Psoas muscle (tissue), 8 donors: ENCODE measurements at regions of chr1 and their contacts with region 1.

Region 1: DNA sequence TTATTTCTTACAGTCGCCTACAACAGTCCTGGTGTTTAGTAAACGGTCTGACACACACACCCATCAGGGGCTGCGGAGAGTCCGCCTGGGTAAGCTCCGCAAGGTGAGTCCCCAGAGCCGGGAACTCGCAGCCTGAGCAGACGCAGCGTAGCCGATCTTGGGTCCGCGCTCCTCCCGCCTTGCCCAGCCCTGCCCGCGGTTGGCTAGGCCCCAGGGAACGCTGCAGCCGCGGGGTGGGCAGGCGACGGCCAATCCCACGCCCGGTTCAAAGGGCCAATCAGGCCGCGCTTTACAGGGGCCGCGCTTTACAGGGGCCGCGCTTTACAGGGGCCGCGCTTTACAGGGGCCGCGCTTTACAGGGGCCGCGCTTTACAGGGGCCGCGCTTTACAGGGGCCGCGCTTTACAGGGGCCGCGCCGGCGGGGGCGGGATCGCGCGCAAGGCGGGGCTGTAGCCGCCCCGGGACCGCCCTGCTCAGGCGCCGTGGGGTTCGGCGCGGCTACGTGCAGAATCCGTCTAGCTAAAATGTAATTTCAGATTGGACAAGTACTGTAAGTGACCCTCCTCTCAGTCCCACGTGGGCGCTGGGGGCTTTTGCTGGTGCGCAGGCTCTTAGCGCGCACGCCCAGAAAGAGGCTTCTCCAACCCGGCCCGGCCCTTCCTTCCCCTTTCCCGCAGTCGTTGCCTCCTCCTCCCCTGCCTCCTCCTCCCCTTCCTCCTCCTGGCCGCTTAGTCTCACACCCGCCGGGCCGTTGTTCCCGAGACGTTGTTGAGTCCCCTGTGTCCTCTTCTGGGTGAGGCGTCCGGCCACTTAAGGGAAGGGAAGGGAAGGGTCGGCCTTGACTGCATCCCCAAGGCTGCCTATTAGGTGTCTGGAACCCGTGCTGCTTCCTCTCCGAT is at the start of gene FGGY:
- DNase-seq: peak; percentile 97 to 99
- ATAC-seq: peak; percentile 82 to 88 (median 86)
- H3K4me3 ChIP-seq: peak within 1 kb of the TSS; percentile 71
- H3K27ac ChIP-seq: peak within 1 kb of the TSS; percentile 95
- H3K4me1 ChIP-seq: peaks cover 48% of the 10 kb centered on the region
- H3K27me3 ChIP-seq: no peaks in the 10 kb centered on the region
- CTCF ChIP-seq: no peak
- total RNA-seq, gene FGGY: 46.5 to 72.2 (median 55.8) TPM

Region 2: GRCh38 chr1:58783993-58784757 is 512.4 kb before region 1 on chr1 and contains the start of gene JUN:
- intact Hi-C with region 1: loop called (anchors 2 to 5 kb)
- DNase-seq: peak; percentile 100
- ATAC-seq: peak; percentile 76 to 89 (median 80)
- H3K4me3 ChIP-seq: peak within 1 kb of the TSS; percentile 99
- H3K27ac ChIP-seq: peak within 1 kb of the TSS; percentile 100
- H3K4me1 ChIP-seq: peaks cover 19% of the 10 kb centered on the region
- H3K27me3 ChIP-seq: no peaks in the 10 kb centered on the region
- CTCF ChIP-seq: no peak
- total RNA-seq, gene JUN: 93.8 to 213 (median 164) TPM

Region 3: GRCh38 chr1:58903514-58904298 is 392.9 kb before region 1 on chr1:
- intact Hi-C with region 1: loop called (anchors 5 to 10 kb)
- DNase-seq: peak; percentile 95 to 97
- ATAC-seq: peak; percentile 90 to 94 (median 92)
- H3K4me3 ChIP-seq: peak overlapping the region; percentile 72
- H3K27ac ChIP-seq: peak overlapping the region; percentile 95
- H3K4me1 ChIP-seq: peaks cover 59% of the 10 kb centered on the region
- H3K27me3 ChIP-seq: no peaks in the 10 kb centered on the region
- CTCF ChIP-seq: no peak

Region 4: GRCh38 chr1:58982259-58982998 is 314.2 kb before region 1 on chr1:
- intact Hi-C with region 1: loop called in 1 of 2 experiments (anchors 10 kb)
- DNase-seq: peak; percentile 43 to 80
- ATAC-seq: peak; percentile 83 to 95 (median 92)
- H3K4me3 ChIP-seq: no peak overlapping the region
- H3K27ac ChIP-seq: peak overlapping the region; percentile 75
- H3K4me1 ChIP-seq: peaks cover 27% of the 10 kb centered on the region
- H3K27me3 ChIP-seq: no peaks in the 10 kb centered on the region
- CTCF ChIP-seq: no peak

Region 5: GRCh38 chr1:59340411-59341307 is 44.1 kb after region 1 on chr1:
- intact Hi-C with region 1: no loop called
- DNase-seq: no peak
- ATAC-seq: no peak
- H3K4me3 ChIP-seq: no peak overlapping the region
- H3K27ac ChIP-seq: no peak overlapping the region
- H3K4me1 ChIP-seq: no peaks in the 10 kb centered on the region
- H3K27me3 ChIP-seq: no peaks in the 10 kb centered on the region
- CTCF ChIP-seq: no peak

Region 6: GRCh38 chr1:59393211-59394180 is 96.9 kb after region 1 on chr1:
- intact Hi-C with region 1: loop called (anchors 2 to 5 kb)
- DNase-seq: peak; percentile 77 to 91
- ATAC-seq: peak; percentile 92 to 96 (median 94)
- H3K4me3 ChIP-seq: peak overlapping the region; percentile 49
- H3K27ac ChIP-seq: peak overlapping the region; percentile 93
- H3K4me1 ChIP-seq: peaks cover 69% of the 10 kb centered on the region
- H3K27me3 ChIP-seq: no peaks in the 10 kb centered on the region
- CTCF ChIP-seq: no peak

Region 7: DNA sequence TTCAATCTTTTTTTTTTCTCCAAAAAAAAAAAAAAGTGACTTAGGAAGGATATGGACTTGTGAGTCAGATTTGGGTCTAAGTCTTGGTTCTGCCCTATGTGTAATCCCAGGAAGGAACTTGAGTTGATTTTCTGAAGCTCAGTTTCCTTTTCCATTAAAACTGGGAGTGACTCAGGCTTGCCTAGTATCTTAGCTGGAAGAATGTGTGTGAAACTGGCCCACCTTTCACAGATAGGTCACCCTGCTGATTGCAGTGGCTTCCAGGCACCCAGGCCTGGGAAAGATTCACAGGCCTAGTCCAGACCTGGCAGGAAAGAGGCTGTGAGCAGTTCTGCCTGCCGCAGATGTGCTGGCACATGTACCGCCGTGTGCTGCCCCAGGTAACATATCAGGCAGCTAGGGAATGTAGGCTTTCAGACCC is 299.8 kb after region 1 on chr1:
- intact Hi-C with region 1: loop called in 1 of 2 experiments (anchors 5 kb)
- DNase-seq: peak in 1 of 2 donors; percentile 16
- ATAC-seq: peak in 2 of 4 donors; percentile 25 to 26
- H3K4me3 ChIP-seq: no peak overlapping the region
- H3K27ac ChIP-seq: peak overlapping the region; percentile 90
- H3K4me1 ChIP-seq: peaks cover 59% of the 10 kb centered on the region
- H3K27me3 ChIP-seq: no peaks in the 10 kb centered on the region
- CTCF ChIP-seq: no peak

Region 8: DNA sequence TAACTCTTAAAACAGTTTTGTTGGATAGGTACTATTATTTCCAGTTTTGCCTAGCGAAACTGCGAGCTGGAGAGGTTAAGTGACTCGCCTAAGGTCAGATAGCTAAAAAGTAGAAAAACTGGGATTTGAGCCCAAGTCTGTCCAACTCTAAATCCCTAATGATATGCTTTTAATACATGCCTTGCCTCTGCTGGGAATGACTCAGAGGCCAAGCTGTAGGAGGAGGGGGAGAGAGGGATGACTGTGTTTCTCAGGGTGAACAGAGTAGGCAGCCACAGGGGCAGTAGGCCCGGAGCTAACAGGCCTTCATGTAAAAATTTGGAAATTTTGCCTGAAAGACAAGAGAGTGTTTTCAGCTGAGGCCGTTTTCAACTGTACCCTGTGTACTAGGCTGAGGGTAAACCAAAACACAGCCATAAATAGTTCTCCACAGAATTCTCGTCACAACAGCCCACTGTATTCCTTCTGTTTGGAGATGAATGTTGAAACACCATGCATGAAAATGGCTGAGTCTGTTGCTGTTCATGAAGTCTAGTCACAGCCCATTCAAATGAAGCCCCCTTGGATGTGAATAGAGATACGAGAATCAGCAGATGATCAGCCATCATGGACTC is 410.7 kb after region 1 on chr1:
- intact Hi-C with region 1: loop called in 1 of 2 experiments (anchors 5 kb)
- DNase-seq: peak; percentile 55 to 69
- ATAC-seq: peak; percentile 75 to 85 (median 82)
- H3K4me3 ChIP-seq: no peak overlapping the region
- H3K27ac ChIP-seq: peak overlapping the region; percentile 78
- H3K4me1 ChIP-seq: peaks cover 55% of the 10 kb centered on the region
- H3K27me3 ChIP-seq: no peaks in the 10 kb centered on the region
- CTCF ChIP-seq: no peak